Mammary epithelial cell (primary cell): ENCODE measurements at regions of chr15 and their contacts with region 1.

Region 1: DNA sequence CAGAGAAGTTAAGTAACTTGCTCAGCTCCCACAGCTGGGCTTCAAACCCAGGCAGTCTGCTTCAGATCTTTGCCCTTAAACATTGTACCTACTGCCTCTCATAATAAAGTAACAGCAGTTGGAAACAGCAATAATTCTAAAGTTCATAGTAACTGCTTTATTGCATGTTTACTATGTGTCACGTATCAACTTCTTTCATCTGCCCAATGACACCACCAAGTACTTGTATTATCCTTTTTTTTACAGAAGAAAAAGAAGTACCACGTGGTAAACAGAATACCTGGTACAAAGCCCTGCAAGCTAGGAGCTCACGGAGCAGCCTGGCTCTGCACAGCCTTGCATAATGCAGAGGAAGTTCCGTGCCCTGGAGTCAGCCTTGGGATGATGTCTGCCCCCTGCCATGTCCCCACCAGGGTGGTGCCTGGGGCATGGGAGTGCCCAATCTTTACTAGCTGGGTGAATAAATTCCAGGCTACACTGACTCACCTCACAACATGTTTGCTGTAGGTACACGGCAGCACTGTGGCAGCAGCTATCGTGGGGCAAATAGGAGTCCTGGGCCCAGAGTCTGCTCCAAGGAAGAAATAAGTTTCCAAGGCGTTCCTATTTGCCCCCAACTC is 77.2 kb downstream of the LDHAL6B start:
- DNase-seq: peak; percentile 97
- H3K4me3 ChIP-seq: no peak overlapping the region
- H3K27ac ChIP-seq: peak overlapping the region; percentile 97
- H3K4me1 ChIP-seq: peaks cover 53% of the 10 kb centered on the region
- H3K27me3 ChIP-seq: no peaks in the 10 kb centered on the region
- CTCF ChIP-seq: peak in 1 of 2 donors; percentile 1

Region 2: GRCh38 chr15:59339252-59339672 is 55.4 kb after region 1 on chr15:
- CTCF ChIA-PET with region 1: no interaction called
- dilution Hi-C with region 1: no loop called
- in situ Hi-C with region 1: no loop called
- intact Hi-C with region 1: loop called (anchors 5 kb)
- DNase-seq: peak; percentile 94
- H3K4me3 ChIP-seq: no peak overlapping the region
- H3K27ac ChIP-seq: peak overlapping the region; percentile 90
- H3K4me1 ChIP-seq: peaks cover 33% of the 10 kb centered on the region
- H3K27me3 ChIP-seq: no peaks in the 10 kb centered on the region
- CTCF ChIP-seq: no peak